ENCODE measurements at regions of chrX and their contacts with region 1.

Region 1: GRCh38 chrX:108070891-108071290 is 20.5 kb downstream of the PSMD10 start:
- DNase-seq: peak; percentile 77
- H3K4me3 Mint-ChIP-seq: no peak overlapping the region
- H3K27ac Mint-ChIP-seq: no peak overlapping the region
- H3K4me1 Mint-ChIP-seq: peaks cover 15% of the 10 kb centered on the region
- H3K27me3 Mint-ChIP-seq: peaks cover 71% of the 10 kb centered on the region
- CTCF ChIP-seq: no peak

Region 2: DNA sequence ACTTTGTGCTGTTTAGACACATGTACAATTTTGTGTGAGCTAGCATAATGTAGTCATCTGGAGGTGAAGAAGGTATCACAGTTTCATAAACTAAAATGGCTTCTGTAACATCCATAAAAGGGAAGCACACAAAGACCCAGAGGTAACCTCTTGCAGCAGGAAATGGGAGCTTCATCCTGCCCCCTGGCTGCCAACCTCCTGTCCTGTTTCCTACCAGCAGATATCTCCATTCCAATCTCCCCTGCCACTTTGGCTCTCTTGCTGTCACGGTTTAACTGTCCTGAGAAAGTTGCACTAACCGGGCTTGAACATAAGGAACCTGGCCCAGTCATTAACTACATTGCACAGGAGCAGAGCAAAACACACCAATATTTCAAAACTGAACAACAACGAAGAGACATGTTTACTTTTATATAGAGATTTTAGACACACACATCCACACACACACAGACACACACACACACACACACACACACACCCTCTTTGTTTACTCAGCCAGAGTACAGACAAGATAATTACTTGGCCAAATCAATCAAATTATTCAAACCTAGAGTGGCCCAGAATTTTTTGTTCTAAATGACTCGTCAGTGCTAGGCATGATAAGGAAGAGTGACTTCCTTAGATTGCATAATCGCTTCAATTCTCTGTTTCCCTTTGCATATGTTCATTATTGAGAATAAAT is 221.0 kb before region 1 on chrX:
- CTCF ChIA-PET with region 1: no interaction called
- POLR2A ChIA-PET with region 1: no interaction called
- intact Hi-C with region 1: no loop called
- DNase-seq: peak; percentile 11
- H3K4me3 Mint-ChIP-seq: no peak overlapping the region
- H3K27ac Mint-ChIP-seq: no peak overlapping the region
- H3K4me1 Mint-ChIP-seq: peaks cover 5% of the 10 kb centered on the region
- H3K27me3 Mint-ChIP-seq: peaks cover 36% of the 10 kb centered on the region
- CTCF ChIP-seq: no peak

Region 3: GRCh38 chrX:107894038-107894437 is 176.9 kb before region 1 on chrX:
- CTCF ChIA-PET with region 1: no interaction called
- POLR2A ChIA-PET with region 1: interaction called, 6 read pairs
- intact Hi-C with region 1: loop called (anchors 5 kb)
- DNase-seq: peak; percentile 71
- H3K4me3 Mint-ChIP-seq: no peak overlapping the region
- H3K27ac Mint-ChIP-seq: no peak overlapping the region
- H3K4me1 Mint-ChIP-seq: no peaks in the 10 kb centered on the region
- H3K27me3 Mint-ChIP-seq: peaks cover 59% of the 10 kb centered on the region
- CTCF ChIP-seq: peak; percentile 46

Region 4: DNA sequence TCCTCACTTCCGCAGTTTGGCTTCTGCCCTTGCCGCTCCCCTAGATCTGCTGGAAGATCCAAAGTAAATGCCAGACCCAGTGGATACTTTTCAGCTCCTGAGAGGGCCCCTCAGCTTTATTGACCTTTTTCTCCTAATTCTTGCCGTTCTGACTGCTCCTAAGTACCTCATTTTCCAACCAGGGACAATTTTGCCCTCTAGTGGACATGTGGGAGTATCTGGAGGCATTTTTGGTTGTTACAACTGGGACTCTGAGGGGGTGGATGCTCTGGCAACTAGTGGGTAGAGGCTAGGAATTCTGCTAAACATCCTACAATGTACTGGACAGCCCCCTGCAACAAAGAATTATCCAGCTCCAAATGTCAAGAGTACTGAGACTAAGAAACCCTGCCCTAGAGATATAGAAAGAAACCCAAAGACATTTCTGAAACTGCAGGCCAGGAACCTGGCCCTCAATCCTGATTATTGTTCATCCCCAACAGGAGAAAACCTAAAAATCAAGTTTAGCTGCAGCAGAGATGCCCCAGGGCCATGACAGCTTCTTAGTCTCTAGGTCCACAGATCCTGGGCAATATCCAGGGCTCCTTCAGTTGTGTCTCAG is 92.1 kb before region 1 on chrX:
- CTCF ChIA-PET with region 1: no interaction called
- POLR2A ChIA-PET with region 1: no interaction called
- intact Hi-C with region 1: loop called (anchors 1 kb)
- DNase-seq: peak; percentile 59
- H3K4me3 Mint-ChIP-seq: no peak overlapping the region
- H3K27ac Mint-ChIP-seq: peak overlapping the region; percentile 11
- H3K4me1 Mint-ChIP-seq: no peaks in the 10 kb centered on the region
- H3K27me3 Mint-ChIP-seq: peaks cover 74% of the 10 kb centered on the region
- CTCF ChIP-seq: peak; percentile 61

Region 5: DNA sequence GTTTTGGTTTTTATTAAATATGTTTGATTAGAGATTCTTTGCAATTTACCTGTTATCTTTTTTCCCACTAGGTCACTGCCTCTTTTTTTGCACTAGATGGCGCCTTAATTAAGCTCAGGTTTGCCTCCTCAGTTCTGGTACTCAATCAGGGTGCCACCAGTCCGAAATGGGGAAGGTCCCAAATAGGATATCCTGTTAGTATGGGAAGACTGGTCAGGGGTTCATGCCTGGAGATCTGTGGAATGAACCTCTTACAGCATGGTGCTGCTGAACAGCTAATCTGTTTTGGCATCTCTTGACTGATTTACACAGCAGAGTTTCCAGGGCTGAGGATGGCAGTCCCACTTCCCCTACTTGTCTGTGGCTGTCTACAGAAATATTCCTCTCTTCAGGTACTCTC is 50.3 kb before region 1 on chrX:
- CTCF ChIA-PET with region 1: interaction called, 30 read pairs
- POLR2A ChIA-PET with region 1: interaction called, 10 read pairs
- intact Hi-C with region 1: loop called (anchors 1 kb)
- DNase-seq: peak; percentile 44
- H3K4me3 Mint-ChIP-seq: no peak overlapping the region
- H3K27ac Mint-ChIP-seq: no peak overlapping the region
- H3K4me1 Mint-ChIP-seq: no peaks in the 10 kb centered on the region
- H3K27me3 Mint-ChIP-seq: peaks cover 77% of the 10 kb centered on the region
- CTCF ChIP-seq: peak; percentile 54

Region 6: DNA sequence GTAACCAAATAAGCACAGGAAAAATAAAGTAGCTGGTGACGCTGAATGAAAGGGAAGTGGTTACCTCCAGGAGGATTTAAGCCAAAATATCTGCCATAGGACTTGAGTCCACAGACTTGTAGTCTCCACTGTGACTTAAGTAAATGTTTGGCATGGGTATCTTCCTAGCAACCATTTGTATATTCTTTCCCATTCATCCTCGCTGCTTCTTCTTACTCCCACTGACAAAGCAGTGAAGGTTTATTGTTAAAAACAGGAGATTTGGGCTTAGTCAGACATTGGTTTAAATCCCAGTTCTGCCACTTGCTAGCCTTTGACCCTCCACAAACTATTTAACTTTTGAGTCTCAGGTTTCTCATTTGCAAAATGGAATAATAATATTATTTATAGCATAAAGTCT is 345.0 kb after region 1 on chrX:
- CTCF ChIA-PET with region 1: no interaction called
- POLR2A ChIA-PET with region 1: no interaction called
- intact Hi-C with region 1: no loop called
- DNase-seq: no peak
- H3K4me3 Mint-ChIP-seq: no peak overlapping the region
- H3K27ac Mint-ChIP-seq: no peak overlapping the region
- H3K4me1 Mint-ChIP-seq: peaks cover 6% of the 10 kb centered on the region
- H3K27me3 Mint-ChIP-seq: peaks cover 54% of the 10 kb centered on the region
- CTCF ChIP-seq: no peak